ENCODE measurements at regions of chr3 and their contacts with region 1.

Region 1: DNA sequence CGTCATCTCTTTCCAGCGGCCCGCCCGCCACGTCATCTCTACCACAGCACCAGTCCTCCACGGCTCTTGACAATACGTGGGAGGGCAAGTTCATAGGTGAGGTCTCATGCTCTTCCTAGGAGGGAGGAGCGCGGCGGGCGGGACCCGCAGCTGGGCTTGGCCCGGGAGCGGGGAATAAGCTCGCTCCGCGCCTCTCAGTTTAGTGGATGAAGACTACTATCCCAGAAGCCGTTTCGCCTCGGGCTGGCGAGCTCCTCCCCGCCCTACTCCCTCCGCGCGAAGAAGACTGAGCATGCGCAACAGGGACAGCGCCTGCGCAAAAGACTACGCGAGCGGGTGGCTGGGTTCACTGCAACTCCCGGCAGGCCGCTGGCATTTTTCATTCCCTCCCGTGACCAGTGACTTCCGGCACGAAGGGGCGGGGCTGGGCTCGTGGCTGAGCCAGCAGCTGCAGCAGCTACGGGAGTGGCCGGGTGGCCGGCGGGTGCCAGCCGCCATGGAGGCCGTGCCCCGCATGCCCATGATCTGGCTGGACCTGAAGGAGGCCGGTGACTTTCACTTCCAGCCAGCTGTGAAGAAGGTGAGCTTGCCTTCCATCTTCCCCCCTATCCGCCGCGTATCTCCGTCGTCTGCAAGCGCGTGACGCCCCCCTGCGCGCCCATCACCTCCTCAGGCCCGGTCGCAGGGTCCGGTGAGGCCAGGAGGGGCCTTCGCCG is at the start of gene PTPN23:
- DNase-seq: peak; percentile 99
- ATAC-seq: peak; percentile 81
- H3K4me3 ChIP-seq: peak within 1 kb of the TSS; percentile 61 to 96 (median 91)
- H3K4me3 Mint-ChIP-seq: peak within 1 kb of the TSS; percentile 100
- H3K27ac ChIP-seq: peak within 1 kb of the TSS; percentile 93 to 95
- H3K27ac Mint-ChIP-seq: peak within 1 kb of the TSS; percentile 99
- H3K4me1 ChIP-seq: peaks cover 21 to 31% of the 10 kb centered on the region in 2 donors
- H3K4me1 Mint-ChIP-seq: peaks cover 53% of the 10 kb centered on the region
- H3K27me3 ChIP-seq: no peaks in the 10 kb centered on the region
- H3K27me3 Mint-ChIP-seq: no peaks in the 10 kb centered on the region
- CTCF ChIP-seq: no peak
- total RNA-seq, gene PTPN23: 68.8 TPM in 2 replicates

Region 2: GRCh38 chr3:46845791-46846623 is 534.8 kb before region 1 on chr3:
- CTCF ChIA-PET with region 1: interaction called, 3 read pairs
- POLR2A ChIA-PET with region 1: no interaction called
- intact Hi-C with region 1: loop called (anchors 5 kb)
- DNase-seq: peak; percentile 86
- ATAC-seq: peak; percentile 97
- H3K4me3 ChIP-seq: peak overlapping the region; percentile 16 to 86 (median 69)
- H3K4me3 Mint-ChIP-seq: peak overlapping the region; percentile 82
- H3K27ac ChIP-seq: peak overlapping the region; percentile 45 to 71
- H3K27ac Mint-ChIP-seq: peak overlapping the region; percentile 75
- H3K4me1 ChIP-seq: peaks cover 12 to 17% of the 10 kb centered on the region in 2 donors
- H3K4me1 Mint-ChIP-seq: peaks cover 9% of the 10 kb centered on the region
- H3K27me3 ChIP-seq: no peaks in the 10 kb centered on the region
- H3K27me3 Mint-ChIP-seq: no peaks in the 10 kb centered on the region
- CTCF ChIP-seq: peak; percentile 76

Region 3: GRCh38 chr3:47164007-47164881 is 216.5 kb before region 1 on chr3 and contains the start of gene SETD2:
- CTCF ChIA-PET with region 1: interaction called, 4 read pairs
- POLR2A ChIA-PET with region 1: interaction called, 6 read pairs
- intact Hi-C with region 1: loop called (anchors 2 kb)
- DNase-seq: peak; percentile 92
- ATAC-seq: peak; percentile 85
- H3K4me3 ChIP-seq: peak within 1 kb of the TSS; percentile 77 to 94 (median 90)
- H3K4me3 Mint-ChIP-seq: peak within 1 kb of the TSS; percentile 96
- H3K27ac ChIP-seq: peak within 1 kb of the TSS; percentile 72 to 93
- H3K27ac Mint-ChIP-seq: peak within 1 kb of the TSS; percentile 97
- H3K4me1 ChIP-seq: peaks cover 33 to 44% of the 10 kb centered on the region in 2 donors
- H3K4me1 Mint-ChIP-seq: peaks cover 43% of the 10 kb centered on the region
- H3K27me3 ChIP-seq: no peaks in the 10 kb centered on the region
- H3K27me3 Mint-ChIP-seq: no peaks in the 10 kb centered on the region
- CTCF ChIP-seq: peak; percentile 51
- total RNA-seq, gene SETD2: 91.4 and 98.9 TPM in 2 replicates

Region 4: GRCh38 chr3:47347217-47347801 is 33.5 kb before region 1 on chr3:
- CTCF ChIA-PET with region 1: no interaction called
- POLR2A ChIA-PET with region 1: no interaction called
- intact Hi-C with region 1: loop called (anchors 2 kb)
- DNase-seq: peak; percentile 73
- ATAC-seq: peak; percentile 90
- H3K4me3 ChIP-seq: no peak overlapping the region
- H3K4me3 Mint-ChIP-seq: peak overlapping the region; percentile 73
- H3K27ac ChIP-seq: peak overlapping the region in 1 of 2 donors; percentile 33
- H3K27ac Mint-ChIP-seq: peak overlapping the region; percentile 73
- H3K4me1 ChIP-seq: peaks cover 21 to 27% of the 10 kb centered on the region in 2 donors
- H3K4me1 Mint-ChIP-seq: peaks cover 38% of the 10 kb centered on the region
- H3K27me3 ChIP-seq: no peaks in the 10 kb centered on the region
- H3K27me3 Mint-ChIP-seq: no peaks in the 10 kb centered on the region
- CTCF ChIP-seq: no peak

Region 5: DNA sequence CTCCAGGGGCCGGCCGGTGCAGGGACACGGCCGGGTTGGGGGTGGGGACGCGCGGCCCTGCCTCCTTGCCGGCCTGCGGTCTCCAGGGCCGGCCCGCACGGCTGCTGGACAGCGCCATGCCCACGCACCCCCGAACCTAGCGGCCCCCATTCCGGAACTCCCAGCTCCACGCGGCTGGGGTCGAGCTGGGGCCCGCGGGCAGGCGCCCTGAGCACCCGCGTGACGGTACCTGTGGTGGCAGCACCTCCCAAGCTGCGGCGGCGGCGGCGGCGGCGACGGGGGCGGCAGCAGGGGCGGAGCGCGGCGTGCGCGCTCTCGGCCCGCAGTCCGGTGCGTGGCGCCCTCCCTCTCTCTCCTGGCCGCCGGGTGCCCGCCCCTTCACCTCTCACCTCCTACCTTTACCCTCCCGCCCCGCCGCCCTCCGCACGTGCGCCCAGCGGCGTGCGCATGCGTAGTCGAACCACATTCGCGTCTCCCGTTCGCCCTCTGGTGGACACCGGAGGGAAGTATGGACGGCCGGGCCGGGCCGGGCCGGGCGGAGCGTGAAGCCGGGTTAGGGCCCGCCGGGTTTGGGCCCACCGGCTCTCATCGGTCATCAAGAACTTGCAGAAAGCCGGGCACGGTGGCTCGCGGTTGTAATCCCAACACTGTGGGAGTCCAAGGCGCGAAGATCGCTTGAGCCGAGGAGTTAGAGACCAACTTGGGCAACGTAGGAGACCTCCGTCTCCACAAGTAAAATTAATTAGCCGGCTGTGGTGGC is 95.0 kb after region 1 on chr3 and contains the start of gene SCAP:
- CTCF ChIA-PET with region 1: no interaction called
- POLR2A ChIA-PET with region 1: no interaction called
- intact Hi-C with region 1: loop called (anchors 1 kb)
- DNase-seq: peak; percentile 97
- ATAC-seq: peak; percentile 94
- H3K4me3 ChIP-seq: peak within 1 kb of the TSS; percentile 68 to 94 (median 81)
- H3K4me3 Mint-ChIP-seq: peak within 1 kb of the TSS; percentile 93
- H3K27ac ChIP-seq: peak within 1 kb of the TSS; percentile 80 to 81
- H3K27ac Mint-ChIP-seq: peak within 1 kb of the TSS; percentile 97
- H3K4me1 ChIP-seq: peaks cover 15 to 24% of the 10 kb centered on the region in 2 donors
- H3K4me1 Mint-ChIP-seq: peaks cover 34% of the 10 kb centered on the region
- H3K27me3 ChIP-seq: no peaks in the 10 kb centered on the region
- H3K27me3 Mint-ChIP-seq: no peaks in the 10 kb centered on the region
- CTCF ChIP-seq: peak; percentile 97
- total RNA-seq, gene SCAP: 100.0 and 113 TPM in 2 replicates

Region 6: DNA sequence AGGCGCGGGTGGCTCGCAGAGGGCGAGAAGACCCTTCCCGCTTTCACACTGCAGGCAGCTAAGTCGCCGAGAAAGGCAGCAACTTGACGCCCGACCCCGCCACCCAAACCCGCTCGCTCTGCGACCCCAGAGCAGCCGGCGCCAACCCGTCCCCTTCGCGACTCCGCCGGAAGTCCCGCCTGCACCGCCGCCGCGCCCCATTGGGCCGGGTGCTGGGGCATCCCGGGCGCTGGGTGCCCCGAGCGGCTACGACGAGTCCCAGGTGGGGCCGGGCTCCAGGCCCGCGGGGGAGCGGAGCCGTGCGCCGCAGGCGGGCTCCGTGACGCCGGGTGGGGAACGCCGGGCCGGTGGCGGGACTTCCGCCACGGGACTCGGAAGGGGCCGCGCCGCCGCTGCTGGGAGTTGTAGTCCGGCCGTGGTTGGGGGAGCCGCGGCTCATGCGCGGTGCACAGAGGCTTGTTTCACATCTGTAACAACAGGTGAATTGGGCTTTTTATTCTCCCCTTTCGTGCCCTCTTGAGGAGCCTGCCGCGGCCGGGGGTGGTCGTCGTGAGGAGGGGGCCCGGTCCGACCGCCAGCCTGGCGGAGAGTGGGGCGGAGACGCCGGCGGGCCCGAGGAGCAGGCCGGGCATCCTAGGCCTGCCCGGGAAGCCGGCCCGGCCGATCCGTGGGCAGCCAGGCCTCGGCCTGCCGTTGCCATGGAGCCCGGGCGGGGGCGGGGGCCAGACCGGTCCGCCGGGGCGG is 422.1 kb after region 1 on chr3 and contains the start of gene DHX30:
- CTCF ChIA-PET with region 1: no interaction called
- POLR2A ChIA-PET with region 1: no interaction called
- intact Hi-C with region 1: loop called (anchors 5 kb)
- DNase-seq: peak; percentile 91
- ATAC-seq: peak; percentile 91
- H3K4me3 ChIP-seq: peak within 1 kb of the TSS; percentile 57 to 84 (median 78)
- H3K4me3 Mint-ChIP-seq: peak within 1 kb of the TSS; percentile 95
- H3K27ac ChIP-seq: peak within 1 kb of the TSS; percentile 66 to 90
- H3K27ac Mint-ChIP-seq: peak within 1 kb of the TSS; percentile 92
- H3K4me1 ChIP-seq: peaks cover 8 to 13% of the 10 kb centered on the region in 2 donors
- H3K4me1 Mint-ChIP-seq: peaks cover 12% of the 10 kb centered on the region
- H3K27me3 ChIP-seq: no peaks in the 10 kb centered on the region
- H3K27me3 Mint-ChIP-seq: no peaks in the 10 kb centered on the region
- CTCF ChIP-seq: no peak
- total RNA-seq, gene DHX30: 81.8 and 88.9 TPM in 2 replicates

Measured in B cell (primary cell).